ENCODE measurements at regions of chr6 and their contacts with region 1.

Region 1: DNA sequence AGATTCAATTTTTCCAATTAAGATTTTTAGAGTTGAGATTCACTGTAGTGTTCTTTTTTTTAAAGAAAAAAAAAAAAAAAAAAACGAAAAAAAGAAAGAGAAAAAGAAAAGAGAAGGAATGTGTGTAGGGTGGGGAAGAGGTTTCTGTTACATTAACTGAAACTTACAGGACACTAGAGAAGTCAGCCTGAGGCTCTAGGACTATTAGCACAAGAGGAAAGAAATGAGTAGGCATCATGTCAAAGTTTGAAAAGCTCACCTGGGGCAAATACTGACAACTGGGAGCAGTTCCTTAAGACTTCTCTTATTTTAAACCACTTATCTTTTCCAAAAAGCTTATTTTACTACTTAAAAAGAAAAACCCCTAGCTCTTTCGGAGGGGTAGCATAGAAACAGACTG is 185.9 kb downstream of the DST start:
- DNase-seq: no peak
- ATAC-seq: no peak
- H3K4me3 ChIP-seq: no peak overlapping the region
- H3K4me3 Mint-ChIP-seq: no peak overlapping the region
- H3K27ac ChIP-seq: no peak overlapping the region
- H3K27ac Mint-ChIP-seq: no peak overlapping the region
- H3K4me1 ChIP-seq: no peaks in the 10 kb centered on the region
- H3K4me1 Mint-ChIP-seq: peaks cover 0 to 2% (median 0%) of the 10 kb centered on the region in 3 donors
- H3K27me3 ChIP-seq: no peaks in the 10 kb centered on the region
- H3K27me3 Mint-ChIP-seq: no peaks in the 10 kb centered on the region

Region 2: DNA sequence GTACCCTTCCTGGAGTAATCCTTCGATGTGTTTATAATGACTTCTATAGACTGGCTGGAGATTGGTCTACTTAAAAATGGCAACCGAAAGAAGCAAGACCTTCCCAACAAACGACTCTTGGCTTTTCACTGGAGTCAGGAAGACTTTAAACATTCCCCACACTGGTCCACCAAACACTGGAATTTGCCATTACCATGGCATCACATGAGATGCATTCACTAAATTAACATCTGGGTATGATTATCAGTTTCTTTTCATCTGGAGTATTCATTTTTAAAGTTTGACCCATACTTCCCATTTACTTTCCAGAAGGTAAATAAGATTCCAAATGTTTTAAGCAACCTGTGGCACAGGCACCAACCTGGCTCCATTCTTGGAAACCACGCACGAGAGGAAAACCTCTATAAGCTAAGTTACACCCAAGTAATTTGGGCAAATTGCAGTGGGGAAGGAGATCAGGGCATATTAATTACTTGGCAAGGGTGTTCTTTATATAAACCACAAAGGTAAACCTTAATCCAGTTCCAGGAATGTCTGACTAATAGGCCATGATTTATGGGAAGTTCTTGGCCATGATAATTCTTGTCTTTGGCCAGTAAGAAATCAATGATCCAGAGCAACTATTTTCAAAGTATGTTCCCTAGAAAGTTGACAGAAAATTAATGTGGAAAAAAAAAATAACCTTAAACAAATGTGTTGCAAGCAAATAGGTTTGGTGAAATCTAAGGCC is 19.4 kb before region 1 on chr6:
- CTCF ChIA-PET with region 1: no interaction called
- POLR2A ChIA-PET with region 1: no interaction called
- DNase-seq: no peak
- ATAC-seq: no peak
- H3K4me3 ChIP-seq: no peak overlapping the region
- H3K4me3 Mint-ChIP-seq: no peak overlapping the region
- H3K27ac ChIP-seq: no peak overlapping the region
- H3K27ac Mint-ChIP-seq: no peak overlapping the region
- H3K4me1 ChIP-seq: no peaks in the 10 kb centered on the region
- H3K4me1 Mint-ChIP-seq: no peaks in the 10 kb centered on the region
- H3K27me3 ChIP-seq: no peaks in the 10 kb centered on the region
- H3K27me3 Mint-ChIP-seq: peaks cover 0 to 18% of the 10 kb centered on the region in 2 donors

Region 3: GRCh38 chr6:56552212-56553130 is 95.7 kb after region 1 on chr6:
- CTCF ChIA-PET with region 1: no interaction called
- POLR2A ChIA-PET with region 1: interaction called in 1 of 2 experiments, 16 read pairs
- DNase-seq: no peak
- ATAC-seq: no peak
- H3K4me3 ChIP-seq: no peak overlapping the region
- H3K4me3 Mint-ChIP-seq: no peak overlapping the region
- H3K27ac ChIP-seq: no peak overlapping the region
- H3K27ac Mint-ChIP-seq: no peak overlapping the region
- H3K4me1 ChIP-seq: no peaks in the 10 kb centered on the region
- H3K4me1 Mint-ChIP-seq: no peaks in the 10 kb centered on the region
- H3K27me3 ChIP-seq: no peaks in the 10 kb centered on the region
- H3K27me3 Mint-ChIP-seq: no peaks in the 10 kb centered on the region

Measured in T-cell (primary cell).